HEK293 (cell line): ENCODE measurements at regions of chr14 and their contacts with region 1.

Region 1: GRCh38 chr14:78566026-78566858 is 396.1 kb downstream of the NRXN3 start:
- H3K4me3 ChIP-seq: peak overlapping the region; percentile 14
- H3K27ac ChIP-seq: no peak overlapping the region
- H3K4me1 ChIP-seq: no peaks in the 10 kb centered on the region
- CTCF ChIP-seq: peak; percentile 13; the same call in 1 of the 2 replicates

Region 2: DNA sequence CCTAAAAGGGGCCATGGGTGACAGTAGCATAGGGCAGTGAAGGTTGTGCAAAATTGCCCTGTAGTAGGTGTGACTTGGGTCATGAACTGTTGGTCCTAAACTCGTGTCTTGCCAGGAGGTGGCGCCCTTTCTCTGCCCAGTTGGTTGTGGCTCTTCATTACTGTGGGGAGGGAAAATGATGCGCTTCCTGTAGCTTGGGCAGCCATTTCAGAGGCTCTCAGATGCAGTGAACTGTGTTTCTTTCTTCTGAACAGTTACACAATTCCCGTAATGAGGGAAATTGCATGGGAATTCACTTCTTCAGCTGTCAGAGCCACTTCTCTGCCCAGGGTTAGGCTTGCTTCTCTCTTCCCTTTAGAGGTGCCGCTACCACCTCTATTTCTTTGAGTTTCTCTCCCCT is 544.2 kb before region 1 on chr14:
- CTCF ChIA-PET with region 1: interaction called, 22 read pairs
- POLR2A ChIA-PET with region 1: no interaction called
- H3K4me3 ChIP-seq: no peak overlapping the region
- H3K27ac ChIP-seq: no peak overlapping the region
- H3K4me1 ChIP-seq: no peaks in the 10 kb centered on the region
- CTCF ChIP-seq: no peak

Region 3: GRCh38 chr14:78448164-78449094 is 117.8 kb before region 1 on chr14:
- CTCF ChIA-PET with region 1: interaction called, 16 read pairs
- POLR2A ChIA-PET with region 1: no interaction called
- H3K4me3 ChIP-seq: no peak overlapping the region
- H3K27ac ChIP-seq: no peak overlapping the region
- H3K4me1 ChIP-seq: no peaks in the 10 kb centered on the region
- CTCF ChIP-seq: no peak

Region 4: GRCh38 chr14:78581229-78581628 is 15.0 kb after region 1 on chr14:
- CTCF ChIA-PET with region 1: interaction called, 22 read pairs
- POLR2A ChIA-PET with region 1: no interaction called
- H3K4me3 ChIP-seq: no peak overlapping the region
- H3K27ac ChIP-seq: no peak overlapping the region
- H3K4me1 ChIP-seq: no peaks in the 10 kb centered on the region
- CTCF ChIP-seq: no peak